ENCODE measurements at regions of chr19 and their contacts with region 1.

Region 1: DNA sequence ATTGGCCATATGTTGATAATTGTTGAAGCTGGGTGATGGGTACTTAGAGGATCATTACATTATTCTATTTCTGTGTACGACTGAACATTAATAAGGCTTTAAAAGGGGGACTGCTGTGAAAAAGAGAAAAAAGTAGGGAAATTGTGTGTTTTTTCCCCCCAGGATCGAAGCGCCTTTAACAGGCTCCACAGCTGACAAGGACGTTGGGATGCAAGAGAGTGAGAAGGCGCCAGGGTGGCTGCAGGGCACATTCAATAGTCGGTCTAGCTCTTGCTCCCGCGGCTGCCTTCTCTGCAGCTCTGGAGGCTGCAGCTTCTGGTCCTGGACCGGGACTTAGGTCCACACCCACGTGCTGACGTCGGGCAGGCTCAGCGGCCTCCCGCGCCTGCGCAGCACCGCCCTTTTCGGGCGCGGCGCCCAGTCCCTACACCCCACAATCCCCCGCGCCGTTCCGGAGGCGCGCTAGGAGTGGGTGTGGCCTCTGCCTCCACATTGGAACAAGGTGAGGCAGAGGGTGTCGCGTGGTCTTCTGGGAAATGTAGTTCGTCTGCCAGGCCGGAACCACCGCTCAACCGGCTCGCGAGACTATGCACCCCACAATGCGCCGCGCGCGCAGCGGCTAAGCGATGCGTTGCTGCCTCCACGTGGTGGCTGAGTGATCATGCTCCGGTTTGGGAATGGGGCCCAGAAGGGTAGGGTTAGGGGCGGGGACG is 4.9 kb upstream of the LRFN3 start:
- DNase-seq: peak; percentile 97 to 100 (median 99)
- ATAC-seq: peak; percentile 98
- H3K4me3 ChIP-seq: peak overlapping the region; percentile 43 to 56
- H3K4me3 Mint-ChIP-seq: peak overlapping the region; percentile 48
- H3K27ac ChIP-seq: peak overlapping the region; percentile 64 to 84
- H3K27ac Mint-ChIP-seq: peak overlapping the region; percentile 89
- H3K4me1 ChIP-seq: peaks cover 43% of the 10 kb centered on the region
- H3K4me1 Mint-ChIP-seq: peaks cover 47% of the 10 kb centered on the region
- H3K27me3 ChIP-seq: no peaks in the 10 kb centered on the region
- H3K27me3 Mint-ChIP-seq: no peaks in the 10 kb centered on the region
- CTCF ChIP-seq: peak; percentile 85

Region 2: GRCh38 chr19:35648017-35648961 is 283.0 kb before region 1 on chr19 and contains the start of gene COX6B1:
- CTCF ChIA-PET with region 1: no interaction called
- POLR2A ChIA-PET with region 1: no interaction called
- intact Hi-C with region 1: loop called in 1 of 2 experiments (anchors 2 kb)
- DNase-seq: peak; percentile 83 to 98 (median 90)
- ATAC-seq: peak; percentile 72
- H3K4me3 ChIP-seq: peak within 1 kb of the TSS; percentile 70 to 82
- H3K4me3 Mint-ChIP-seq: peak within 1 kb of the TSS; percentile 99
- H3K27ac ChIP-seq: peak within 1 kb of the TSS; percentile 66 to 80
- H3K27ac Mint-ChIP-seq: peak within 1 kb of the TSS; percentile 97
- H3K4me1 ChIP-seq: peaks cover 32% of the 10 kb centered on the region
- H3K4me1 Mint-ChIP-seq: peaks cover 52% of the 10 kb centered on the region
- H3K27me3 ChIP-seq: no peaks in the 10 kb centered on the region
- H3K27me3 Mint-ChIP-seq: no peaks in the 10 kb centered on the region
- CTCF ChIP-seq: no peak
- total RNA-seq, gene COX6B1: 152 to 171 TPM

Region 3: GRCh38 chr19:35740423-35741202 is 190.7 kb before region 1 on chr19:
- CTCF ChIA-PET with region 1: no interaction called
- POLR2A ChIA-PET with region 1: interaction called, 10 read pairs
- intact Hi-C with region 1: loop called (anchors 1 to 2 kb)
- DNase-seq: peak; percentile 87 to 97 (median 95)
- ATAC-seq: peak; percentile 65
- H3K4me3 ChIP-seq: peak overlapping the region; percentile 60 to 63
- H3K4me3 Mint-ChIP-seq: peak overlapping the region; percentile 87
- H3K27ac ChIP-seq: peak overlapping the region; percentile 50 to 58
- H3K27ac Mint-ChIP-seq: peak overlapping the region; percentile 83
- H3K4me1 ChIP-seq: peaks cover 51% of the 10 kb centered on the region
- H3K4me1 Mint-ChIP-seq: peaks cover 53% of the 10 kb centered on the region
- H3K27me3 ChIP-seq: no peaks in the 10 kb centered on the region
- H3K27me3 Mint-ChIP-seq: no peaks in the 10 kb centered on the region
- CTCF ChIP-seq: no peak

Region 4: DNA sequence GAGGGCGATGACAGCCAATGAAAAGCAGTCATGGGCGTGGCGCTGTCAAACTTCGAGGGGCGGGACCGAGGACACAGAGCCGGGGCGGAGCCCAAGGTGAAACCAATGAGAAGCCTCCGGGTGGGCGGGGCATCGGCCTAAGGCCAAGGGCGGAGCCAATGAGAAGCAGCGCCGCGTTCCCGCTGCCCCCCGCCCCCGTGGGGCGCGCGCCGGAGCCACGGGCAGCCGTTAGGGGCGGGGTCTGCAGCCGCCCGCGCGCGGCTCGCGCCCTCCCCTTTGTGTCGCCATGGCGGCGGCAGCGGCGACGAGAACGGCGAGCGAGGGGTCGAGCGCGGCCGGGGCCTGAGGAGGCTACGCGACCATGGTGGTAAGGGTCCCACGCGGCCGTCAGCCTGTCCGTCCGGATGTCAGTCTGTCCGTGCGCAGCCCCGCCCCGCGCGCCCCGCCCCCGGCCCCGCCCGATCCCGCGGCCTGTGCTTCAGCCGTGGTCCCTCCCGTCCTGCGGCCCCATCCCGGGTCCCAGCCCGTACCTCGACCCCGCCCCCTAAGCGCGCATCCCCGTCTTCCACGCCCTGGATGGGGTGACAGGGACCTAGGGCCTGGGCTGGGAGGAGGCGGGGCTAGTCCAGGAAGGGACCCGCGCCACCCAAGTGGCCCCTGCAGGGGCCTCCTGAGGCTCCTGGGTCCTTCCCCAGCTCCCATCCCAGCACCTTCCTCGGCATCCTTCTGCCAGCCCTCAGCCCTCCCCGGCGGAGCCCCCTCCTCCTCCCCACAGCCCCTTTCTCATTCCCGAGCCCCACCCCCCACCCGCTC is 155.8 kb before region 1 on chr19 and contains the start of gene ARHGAP33:
- CTCF ChIA-PET with region 1: interaction called, 3 read pairs
- POLR2A ChIA-PET with region 1: no interaction called
- intact Hi-C with region 1: loop called (anchors 1 kb)
- DNase-seq: peak; percentile 94 to 99 (median 98)
- ATAC-seq: peak; percentile 99
- H3K4me3 ChIP-seq: peak within 1 kb of the TSS; percentile 54 to 60
- H3K4me3 Mint-ChIP-seq: peak within 1 kb of the TSS; percentile 84
- H3K27ac ChIP-seq: no peak within 1 kb of the TSS
- H3K27ac Mint-ChIP-seq: no peak within 1 kb of the TSS
- H3K4me1 ChIP-seq: peaks cover 12% of the 10 kb centered on the region
- H3K4me1 Mint-ChIP-seq: peaks cover 21% of the 10 kb centered on the region
- H3K27me3 ChIP-seq: no peaks in the 10 kb centered on the region
- H3K27me3 Mint-ChIP-seq: no peaks in the 10 kb centered on the region
- CTCF ChIP-seq: no peak
- total RNA-seq, gene ARHGAP33: 8.7 to 10.6 TPM

Region 5: GRCh38 chr19:35959040-35959967 is 28.0 kb after region 1 on chr19:
- CTCF ChIA-PET with region 1: interaction called, 4 read pairs
- POLR2A ChIA-PET with region 1: interaction called, 3 read pairs
- intact Hi-C with region 1: loop called in 1 of 2 experiments (anchors 1 kb)
- DNase-seq: peak; percentile 60 to 93 (median 82)
- ATAC-seq: peak; percentile 99
- H3K4me3 ChIP-seq: peak overlapping the region; percentile 57 to 62
- H3K4me3 Mint-ChIP-seq: peak overlapping the region; percentile 70
- H3K27ac ChIP-seq: peak overlapping the region in 1 of 2 experiments; percentile 25
- H3K27ac Mint-ChIP-seq: no peak overlapping the region
- H3K4me1 ChIP-seq: peaks cover 43% of the 10 kb centered on the region
- H3K4me1 Mint-ChIP-seq: peaks cover 37% of the 10 kb centered on the region
- H3K27me3 ChIP-seq: peaks cover 0 to 4% of the 10 kb centered on the region in 2 experiments
- H3K27me3 Mint-ChIP-seq: peaks cover 4% of the 10 kb centered on the region
- CTCF ChIP-seq: peak; percentile 77

Region 6: GRCh38 chr19:36114763-36115452 is 183.6 kb after region 1 on chr19 and contains the start of gene POLR2I:
- CTCF ChIA-PET with region 1: no interaction called
- POLR2A ChIA-PET with region 1: no interaction called
- intact Hi-C with region 1: loop called in 1 of 2 experiments (anchors 10 kb)
- DNase-seq: peak; percentile 96 to 100 (median 99)
- ATAC-seq: peak; percentile 85
- H3K4me3 ChIP-seq: peak within 1 kb of the TSS; percentile 71 to 73
- H3K4me3 Mint-ChIP-seq: peak within 1 kb of the TSS; percentile 92
- H3K27ac ChIP-seq: peak within 1 kb of the TSS; percentile 77 to 92
- H3K27ac Mint-ChIP-seq: peak within 1 kb of the TSS; percentile 97
- H3K4me1 ChIP-seq: peaks cover 18% of the 10 kb centered on the region
- H3K4me1 Mint-ChIP-seq: peaks cover 39% of the 10 kb centered on the region
- H3K27me3 ChIP-seq: no peaks in the 10 kb centered on the region
- H3K27me3 Mint-ChIP-seq: no peaks in the 10 kb centered on the region
- CTCF ChIP-seq: no peak
- total RNA-seq, gene POLR2I: 27.4 to 34.7 TPM

Region 7: DNA sequence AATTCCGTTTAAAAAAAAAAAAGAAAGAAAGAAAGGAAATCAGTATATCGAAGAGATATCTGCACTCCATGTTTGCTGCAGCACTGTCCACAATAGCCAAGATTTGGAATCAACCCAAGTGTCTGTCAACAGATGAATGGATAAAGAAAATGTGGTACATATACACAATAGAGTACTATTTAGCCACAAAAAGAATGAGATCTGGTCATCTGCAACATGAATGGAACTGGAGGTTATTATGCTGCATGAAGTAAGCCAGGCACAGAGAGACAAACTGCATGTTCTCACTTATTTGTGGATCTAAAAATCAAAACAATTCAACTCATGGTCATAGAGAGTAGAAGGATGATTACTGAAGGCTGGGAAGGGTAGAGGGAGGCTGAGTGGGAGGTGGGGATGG is 266.8 kb after region 1 on chr19:
- CTCF ChIA-PET with region 1: no interaction called
- POLR2A ChIA-PET with region 1: no interaction called
- intact Hi-C with region 1: no loop called
- DNase-seq: no peak
- ATAC-seq: no peak
- H3K4me3 ChIP-seq: no peak overlapping the region
- H3K4me3 Mint-ChIP-seq: no peak overlapping the region
- H3K27ac ChIP-seq: no peak overlapping the region
- H3K27ac Mint-ChIP-seq: no peak overlapping the region
- H3K4me1 ChIP-seq: no peaks in the 10 kb centered on the region
- H3K4me1 Mint-ChIP-seq: no peaks in the 10 kb centered on the region
- H3K27me3 ChIP-seq: no peaks in the 10 kb centered on the region
- H3K27me3 Mint-ChIP-seq: no peaks in the 10 kb centered on the region
- CTCF ChIP-seq: no peak

Measured in CD8-positive, alpha-beta T cell (primary cell).